Heart left ventricle (tissue), 16 donors: ENCODE measurements at regions of chr11 and their contacts with region 1.

Region 1: GRCh38 chr11:60699284-60699691 is at the start of gene MS4A8:
- DNase-seq: no peak
- ATAC-seq: no peak
- H3K4me3 ChIP-seq: no peak within 1 kb of the TSS
- H3K27ac ChIP-seq: no peak within 1 kb of the TSS
- H3K4me1 ChIP-seq: no peaks in the 10 kb centered on the region
- H3K27me3 ChIP-seq: peaks cover 0 to 4% (median 0%) of the 10 kb centered on the region in 9 donors
- CTCF ChIP-seq: no peak
- POLR2A ChIP-seq: no peak
- total RNA-seq, gene MS4A8: not detected

Region 2: DNA sequence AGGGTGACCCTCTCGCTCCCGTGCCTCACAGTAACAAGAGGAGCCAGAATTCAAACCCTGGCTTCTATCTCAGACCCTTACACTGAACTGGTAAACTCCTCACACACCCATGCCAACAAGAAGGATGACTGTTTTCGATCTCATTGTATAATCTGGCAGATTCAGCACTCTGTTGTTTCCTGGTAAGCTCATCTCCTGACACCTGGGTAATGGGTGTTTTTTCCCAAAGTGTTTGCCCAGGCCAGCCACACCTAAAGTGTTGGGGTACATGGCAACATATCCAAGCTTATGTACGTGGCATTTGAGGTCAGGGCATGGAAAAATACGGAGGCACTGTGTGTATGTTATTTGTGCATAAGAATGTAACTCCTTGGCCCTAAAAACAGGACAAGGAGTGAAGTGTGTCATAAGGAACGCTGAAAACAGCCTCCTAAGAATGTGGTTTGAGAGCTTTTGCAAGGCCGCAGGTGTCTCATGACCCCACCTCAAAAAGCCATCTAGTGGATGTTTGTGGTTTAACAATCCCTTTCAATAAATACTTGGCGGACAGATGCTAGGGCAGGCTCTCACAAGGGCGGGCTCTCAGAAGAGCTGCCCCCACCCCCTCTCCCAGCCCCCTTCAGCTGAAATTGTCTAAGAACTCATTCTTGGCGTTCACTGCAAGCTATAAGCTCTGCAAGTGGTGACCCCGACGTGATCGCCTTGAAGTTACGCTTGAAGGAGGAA is 57.2 kb after region 1 on chr11 and contains the start of gene MS4A15:
- intact Hi-C with region 1: loop called in 1 of 10 experiments (anchors 10 kb)
- DNase-seq: no peak
- ATAC-seq: no peak
- H3K4me3 ChIP-seq: no peak within 1 kb of the TSS
- H3K27ac ChIP-seq: no peak within 1 kb of the TSS
- H3K4me1 ChIP-seq: no peaks in the 10 kb centered on the region
- H3K27me3 ChIP-seq: peaks cover 0 to 41% (median 6%) of the 10 kb centered on the region in 9 donors
- CTCF ChIP-seq: peak in 2 of 12 donors; percentile 5 to 9
- POLR2A ChIP-seq: no peak
- total RNA-seq, gene MS4A15: not detected